ENCODE measurements at regions of chr11 and their contacts with region 1.

Region 1: DNA sequence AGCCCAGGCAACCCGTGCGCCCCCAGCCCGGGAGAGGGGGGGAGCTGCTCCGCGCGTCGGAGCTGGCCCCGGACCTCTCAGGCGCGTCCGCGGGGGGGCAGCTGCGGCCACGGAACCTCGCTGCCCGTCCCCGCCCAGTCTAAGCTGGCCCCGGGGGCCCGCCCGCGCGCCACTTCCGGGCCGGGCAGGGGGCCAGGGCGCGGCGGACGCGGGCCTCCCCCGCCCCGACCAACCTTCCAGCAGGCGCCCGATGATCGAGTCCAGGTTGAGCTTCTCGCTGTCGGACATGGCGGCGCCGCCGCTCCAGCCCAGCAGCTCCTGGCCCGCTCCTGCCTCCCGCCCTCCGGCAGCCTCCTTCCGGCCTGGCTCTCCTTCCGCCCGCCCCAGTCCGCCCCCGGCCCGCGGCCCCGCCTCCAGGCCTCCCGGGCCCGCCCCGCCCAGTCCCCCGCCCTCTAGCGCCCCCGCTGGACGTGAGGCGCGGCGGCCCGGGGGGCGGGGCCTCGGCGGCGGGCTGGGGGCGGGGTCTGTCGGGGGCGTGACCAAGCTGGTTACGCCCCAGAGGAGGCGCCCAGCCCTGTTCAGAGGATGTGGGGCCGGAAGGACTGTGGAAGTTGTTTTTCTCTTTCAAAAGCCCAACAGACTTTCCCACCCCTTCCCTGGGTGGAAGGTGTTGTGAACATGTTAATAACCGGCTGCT is at the start of gene PPP1CA:
- DNase-seq: no peak
- H3K4me3 ChIP-seq: peak within 1 kb of the TSS; percentile 86
- CTCF ChIP-seq: peak; percentile 33

Region 2: GRCh38 chr11:67353317-67354074 is 48.1 kb before region 1 on chr11 and contains the start of gene POLD4:
- CTCF ChIA-PET with region 1: interaction called, 2,108 read pairs
- POLR2A ChIA-PET with region 1: interaction called, 4 read pairs
- DNase-seq: peak; percentile 77
- H3K4me3 ChIP-seq: peak within 1 kb of the TSS; percentile 92
- CTCF ChIP-seq: no peak

Region 3: DNA sequence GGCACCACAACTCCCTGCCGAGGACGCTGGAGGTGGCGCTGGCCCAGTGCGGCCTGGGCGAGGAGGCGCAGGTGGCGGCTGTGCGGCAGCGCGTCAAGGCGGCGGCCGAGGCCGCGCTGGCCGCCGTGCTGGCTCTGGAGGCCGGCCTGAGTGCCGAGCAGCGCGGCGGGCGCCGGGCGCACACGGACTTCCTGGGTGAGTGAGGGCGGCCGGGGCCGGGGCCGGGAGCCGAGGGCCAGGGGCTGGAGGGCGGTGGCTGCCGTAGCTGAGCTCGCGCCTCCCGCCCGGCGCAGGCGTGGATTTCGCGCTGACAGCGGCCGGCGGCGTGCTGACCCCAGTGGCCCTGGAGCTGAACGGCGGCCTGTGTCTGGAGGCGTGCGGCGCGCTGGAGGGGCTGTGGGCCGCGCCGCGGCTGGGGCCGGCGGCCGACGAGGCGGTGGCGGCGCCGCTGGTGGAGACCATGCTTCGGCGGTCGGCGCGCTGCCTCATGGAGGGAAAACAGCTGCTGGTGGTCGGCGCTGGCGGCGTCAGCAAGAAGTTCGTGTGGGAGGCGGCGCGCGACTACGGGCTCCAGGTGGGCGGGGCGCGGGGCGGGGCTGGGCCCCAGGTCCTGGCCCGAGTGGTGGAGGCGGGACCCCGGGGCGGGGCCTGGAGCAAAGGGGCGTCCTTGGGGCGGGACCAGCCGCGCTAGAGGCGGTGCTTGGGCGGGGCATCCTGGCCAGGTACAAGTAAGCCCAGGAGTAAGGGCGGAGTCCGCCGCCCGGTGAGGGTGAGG is 19.2 kb after region 1 on chr11:
- CTCF ChIA-PET with region 1: interaction called, 40 read pairs
- POLR2A ChIA-PET with region 1: interaction called, 4 read pairs
- DNase-seq: peak; percentile 7
- H3K4me3 ChIP-seq: peak overlapping the region; percentile 54
- CTCF ChIP-seq: no peak

Region 4: DNA sequence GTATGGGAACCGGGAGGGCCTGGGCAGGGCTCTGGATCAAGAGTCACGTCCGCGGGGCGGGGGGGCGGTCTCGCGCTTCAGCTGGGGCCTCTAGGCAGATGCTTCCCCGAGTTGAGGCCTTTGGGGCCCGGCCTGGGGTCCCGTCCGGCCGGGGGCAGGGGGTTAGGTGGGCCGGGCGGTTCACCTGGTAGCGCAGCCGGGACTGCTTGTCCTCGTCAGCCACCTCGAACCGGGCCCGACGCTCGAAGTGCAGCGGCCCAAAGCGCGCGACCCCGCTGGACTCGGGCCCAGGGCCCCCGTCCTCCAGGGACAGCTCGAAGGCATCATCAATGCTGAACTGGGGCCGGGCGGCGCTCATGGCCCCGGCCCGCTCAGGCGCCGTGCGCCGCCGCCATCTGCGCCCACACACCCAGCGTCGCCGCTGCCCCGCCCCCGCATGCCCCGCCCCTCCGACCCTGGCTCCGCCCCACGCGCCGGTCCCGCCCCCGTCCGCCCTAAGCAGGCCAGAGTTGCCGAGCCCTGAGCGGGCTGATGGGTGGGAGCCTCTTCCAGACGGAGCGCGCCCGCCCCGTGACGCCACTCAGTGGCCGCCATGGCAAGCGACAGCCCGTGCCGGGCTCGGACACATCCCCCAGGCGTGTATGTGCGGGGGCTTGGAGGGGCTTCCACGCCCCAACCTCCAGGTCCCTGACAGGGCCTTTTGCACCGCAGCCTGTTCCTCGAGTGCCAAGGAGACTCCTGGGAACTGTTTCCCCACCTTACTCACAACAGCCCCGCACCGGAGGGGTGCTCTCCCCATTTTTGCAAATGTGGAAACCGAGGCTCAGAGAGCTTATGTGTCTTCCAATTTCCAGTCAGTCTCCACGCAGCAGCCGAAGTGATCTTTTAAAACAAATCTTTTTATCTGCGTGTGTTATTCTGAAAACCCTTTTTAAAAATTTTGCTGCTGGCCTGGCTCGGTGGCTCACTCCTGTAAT is 67.5 kb after region 1 on chr11 and contains the start of gene TMEM134:
- CTCF ChIA-PET with region 1: interaction called, 18 read pairs
- POLR2A ChIA-PET with region 1: interaction called, 12 read pairs
- DNase-seq: peak; percentile 19
- H3K4me3 ChIP-seq: peak within 1 kb of the TSS; percentile 79
- CTCF ChIP-seq: peak; percentile 71